ENCODE measurements at regions of chr3 and their contacts with region 1.

Region 1: DNA sequence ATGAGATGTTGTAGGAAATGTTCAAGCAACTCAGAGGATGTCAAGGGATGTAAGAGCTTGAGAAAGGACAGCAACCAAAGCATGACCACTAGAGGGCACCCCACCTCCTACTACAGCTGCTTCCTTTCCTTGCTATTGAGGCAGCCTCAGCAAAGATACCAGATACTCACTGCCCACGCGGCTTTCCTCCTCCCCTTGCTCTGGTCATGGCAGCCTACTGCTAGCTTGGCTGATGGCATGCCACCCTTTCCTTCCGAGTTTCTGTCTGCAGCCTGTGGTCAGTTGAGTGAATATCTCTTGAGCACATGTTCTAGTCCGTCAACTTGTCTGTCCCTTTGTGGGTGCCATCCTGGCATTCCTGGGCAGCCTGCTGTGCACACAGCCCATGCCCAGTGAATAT is 4.4 kb upstream of the CXCR6 start:
- DNase-seq: peak; percentile 72 to 93 (median 86)
- ATAC-seq: peak; percentile 66
- H3K4me3 ChIP-seq: no peak overlapping the region
- H3K4me3 Mint-ChIP-seq: no peak overlapping the region
- H3K27ac ChIP-seq: no peak overlapping the region
- H3K27ac Mint-ChIP-seq: no peak overlapping the region
- H3K4me1 ChIP-seq: peaks cover 27% of the 10 kb centered on the region
- H3K4me1 Mint-ChIP-seq: peaks cover 39% of the 10 kb centered on the region
- H3K27me3 ChIP-seq: no peaks in the 10 kb centered on the region
- H3K27me3 Mint-ChIP-seq: no peaks in the 10 kb centered on the region
- CTCF ChIP-seq: peak; percentile 63

Region 2: DNA sequence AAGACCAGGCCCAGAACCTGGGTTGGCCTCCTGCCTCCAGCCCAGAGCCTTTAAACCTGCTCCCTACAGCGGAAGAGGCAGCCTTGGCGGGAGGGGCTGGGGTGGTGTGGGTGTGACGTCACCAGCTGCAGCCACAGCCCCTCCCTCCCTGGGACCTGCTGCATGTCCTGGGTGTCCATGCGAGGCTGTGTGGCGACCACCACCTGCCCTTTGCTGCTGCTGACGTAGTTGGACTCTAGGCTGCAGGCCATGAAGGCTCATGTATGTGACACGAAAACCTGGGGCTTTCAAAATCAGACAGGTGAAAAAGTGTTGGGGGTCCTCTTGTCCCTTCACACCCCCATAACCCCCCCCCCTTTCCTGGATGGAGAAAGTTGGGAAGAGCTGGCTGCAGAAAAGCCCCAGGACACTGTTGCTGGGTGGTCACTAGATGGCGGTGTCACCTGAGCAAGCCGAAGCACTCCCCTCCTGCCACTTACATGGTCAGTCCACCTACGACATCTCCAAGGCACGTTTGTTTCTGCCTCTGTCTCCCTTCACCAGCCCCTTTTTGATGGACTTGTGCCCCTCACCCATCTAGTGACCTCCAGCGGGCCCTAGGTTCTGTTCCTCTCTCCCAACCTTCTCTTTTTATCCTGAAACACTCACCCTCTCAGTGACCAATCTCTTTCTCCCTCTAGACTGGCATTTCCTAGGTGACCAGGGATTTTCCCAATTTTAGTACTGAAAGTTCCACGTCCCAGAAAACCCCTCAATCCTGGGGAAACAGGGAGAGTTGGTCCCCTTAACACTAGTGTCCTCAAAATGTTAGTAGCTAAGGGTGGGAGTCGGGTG is 177.8 kb before region 1 on chr3:
- CTCF ChIA-PET with region 1: interaction called, 19 read pairs
- POLR2A ChIA-PET with region 1: no interaction called
- intact Hi-C with region 1: no loop called
- DNase-seq: peak in 6 of 9 experiments; percentile 22 to 72 (median 55)
- ATAC-seq: peak; percentile 62
- H3K4me3 ChIP-seq: no peak overlapping the region
- H3K4me3 Mint-ChIP-seq: no peak overlapping the region
- H3K27ac ChIP-seq: no peak overlapping the region
- H3K27ac Mint-ChIP-seq: no peak overlapping the region
- H3K4me1 ChIP-seq: no peaks in the 10 kb centered on the region
- H3K4me1 Mint-ChIP-seq: peaks cover 3% of the 10 kb centered on the region
- H3K27me3 ChIP-seq: no peaks in the 10 kb centered on the region
- H3K27me3 Mint-ChIP-seq: peaks cover 3% of the 10 kb centered on the region
- CTCF ChIP-seq: peak; percentile 45

Region 3: GRCh38 chr3:45964139-45964538 is 25.3 kb after region 1 on chr3:
- CTCF ChIA-PET with region 1: interaction called, 60 read pairs
- POLR2A ChIA-PET with region 1: interaction called, 29 read pairs
- intact Hi-C with region 1: loop called in 1 of 2 experiments (anchors 2 kb)
- DNase-seq: peak in 3 of 9 experiments; percentile 41 to 57 (median 53)
- ATAC-seq: peak; percentile 70
- H3K4me3 ChIP-seq: no peak overlapping the region
- H3K4me3 Mint-ChIP-seq: no peak overlapping the region
- H3K27ac ChIP-seq: peak overlapping the region in 1 of 2 experiments; percentile 66
- H3K27ac Mint-ChIP-seq: peak overlapping the region; percentile 91
- H3K4me1 ChIP-seq: peaks cover 33% of the 10 kb centered on the region
- H3K4me1 Mint-ChIP-seq: peaks cover 66% of the 10 kb centered on the region
- H3K27me3 ChIP-seq: no peaks in the 10 kb centered on the region
- H3K27me3 Mint-ChIP-seq: no peaks in the 10 kb centered on the region
- CTCF ChIP-seq: no peak

Region 4: DNA sequence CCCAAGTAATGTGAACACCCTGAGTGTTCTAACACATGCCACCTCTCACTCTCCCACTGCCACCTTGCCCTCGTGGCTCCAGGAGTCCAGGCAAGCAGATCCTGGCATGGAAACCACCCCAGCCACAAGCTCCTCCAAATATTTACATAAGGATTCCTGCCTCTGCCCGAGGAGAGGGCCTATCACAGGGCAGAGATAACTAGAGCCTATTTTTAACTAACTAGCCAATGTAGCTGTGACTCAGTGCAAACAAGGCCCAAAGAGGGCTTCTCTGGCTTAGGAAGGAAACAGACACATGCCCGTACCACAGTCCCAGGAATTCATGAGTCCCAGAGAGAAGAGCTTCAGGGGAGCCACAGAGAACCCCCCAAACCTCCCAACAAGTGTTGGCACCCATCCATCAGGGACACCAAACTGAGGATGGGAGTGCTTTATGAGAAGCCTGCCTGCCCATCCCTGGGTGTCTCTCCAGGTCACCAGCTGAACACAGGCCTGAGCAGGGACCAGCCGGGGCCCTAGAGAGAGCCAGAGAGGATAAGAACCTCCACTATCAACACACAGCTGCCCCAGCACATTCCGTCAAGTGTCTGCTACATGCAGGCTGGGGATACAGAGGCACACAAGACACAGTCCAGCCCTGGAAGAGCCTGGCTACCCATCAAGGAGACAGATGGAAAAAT is 47.6 kb after region 1 on chr3:
- CTCF ChIA-PET with region 1: interaction called, 12 read pairs
- POLR2A ChIA-PET with region 1: interaction called, 3 read pairs
- intact Hi-C with region 1: no loop called
- DNase-seq: no peak
- ATAC-seq: no peak
- H3K4me3 ChIP-seq: no peak overlapping the region
- H3K4me3 Mint-ChIP-seq: no peak overlapping the region
- H3K27ac ChIP-seq: no peak overlapping the region
- H3K27ac Mint-ChIP-seq: peak overlapping the region; percentile 32
- H3K4me1 ChIP-seq: peaks cover 3% of the 10 kb centered on the region
- H3K4me1 Mint-ChIP-seq: peaks cover 64% of the 10 kb centered on the region
- H3K27me3 ChIP-seq: no peaks in the 10 kb centered on the region
- H3K27me3 Mint-ChIP-seq: no peaks in the 10 kb centered on the region
- CTCF ChIP-seq: no peak

Region 5: GRCh38 chr3:46276502-46277099 is 337.7 kb after region 1 on chr3:
- CTCF ChIA-PET with region 1: no interaction called
- POLR2A ChIA-PET with region 1: no interaction called
- intact Hi-C with region 1: loop called in 1 of 2 experiments (anchors 10 kb)
- DNase-seq: peak; percentile 59 to 86 (median 77)
- ATAC-seq: peak; percentile 80
- H3K4me3 ChIP-seq: no peak overlapping the region
- H3K4me3 Mint-ChIP-seq: no peak overlapping the region
- H3K27ac ChIP-seq: no peak overlapping the region
- H3K27ac Mint-ChIP-seq: no peak overlapping the region
- H3K4me1 ChIP-seq: peaks cover 15% of the 10 kb centered on the region
- H3K4me1 Mint-ChIP-seq: peaks cover 37% of the 10 kb centered on the region
- H3K27me3 ChIP-seq: no peaks in the 10 kb centered on the region
- H3K27me3 Mint-ChIP-seq: peaks cover 2% of the 10 kb centered on the region
- CTCF ChIP-seq: peak; percentile 79

Region 6: GRCh38 chr3:47578119-47578632 is 1639.3 kb after region 1 on chr3:
- CTCF ChIA-PET with region 1: no interaction called
- POLR2A ChIA-PET with region 1: no interaction called
- intact Hi-C with region 1: no loop called
- DNase-seq: peak in 7 of 9 experiments; percentile 9 to 65 (median 41)
- ATAC-seq: peak; percentile 74
- H3K4me3 ChIP-seq: peak overlapping the region; percentile 33 to 37
- H3K4me3 Mint-ChIP-seq: peak overlapping the region; percentile 75
- H3K27ac ChIP-seq: no peak overlapping the region
- H3K27ac Mint-ChIP-seq: no peak overlapping the region
- H3K4me1 ChIP-seq: peaks cover 7% of the 10 kb centered on the region
- H3K4me1 Mint-ChIP-seq: no peaks in the 10 kb centered on the region
- H3K27me3 ChIP-seq: peaks cover 7 to 12% of the 10 kb centered on the region in 2 experiments
- H3K27me3 Mint-ChIP-seq: peaks cover 24% of the 10 kb centered on the region
- CTCF ChIP-seq: no peak